Dorsolateral prefrontal cortex (tissue), 120 donors: ENCODE measurements at regions of chr7 and their contacts with region 1.

Region 1: DNA sequence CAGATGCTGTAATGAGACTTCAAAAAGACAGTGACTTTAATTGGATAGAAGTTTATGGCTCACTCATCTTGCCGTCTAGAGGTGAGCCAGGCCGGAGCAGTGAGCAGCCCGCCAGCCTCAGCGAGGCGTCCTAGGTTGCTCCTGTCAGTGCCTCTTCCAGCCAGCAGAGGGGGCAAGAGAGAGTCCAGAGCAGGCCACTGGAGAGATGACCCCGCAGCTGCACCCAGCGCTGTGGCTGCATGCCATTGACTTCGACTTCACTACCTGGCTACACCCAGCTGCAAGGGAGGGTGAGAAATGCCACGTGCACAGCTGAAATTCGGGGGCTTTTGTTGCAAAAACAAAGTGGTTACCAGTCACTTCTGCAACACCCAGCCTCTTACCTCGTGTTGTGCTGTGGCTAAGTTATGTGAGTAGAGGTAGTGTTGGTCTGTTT is 26.5 kb downstream of the NUB1 start:
- DNase-seq: peak; percentile 66 to 79 (median 74)
- H3K4me3 ChIP-seq: peak overlapping the region in 1 of 59 donors; percentile 10
- H3K27ac ChIP-seq: no peak overlapping the region
- H3K27me3 ChIP-seq: no peaks in the 10 kb centered on the region
- CTCF ChIP-seq: peak; percentile 60 to 99 (median 94)

Region 2: DNA sequence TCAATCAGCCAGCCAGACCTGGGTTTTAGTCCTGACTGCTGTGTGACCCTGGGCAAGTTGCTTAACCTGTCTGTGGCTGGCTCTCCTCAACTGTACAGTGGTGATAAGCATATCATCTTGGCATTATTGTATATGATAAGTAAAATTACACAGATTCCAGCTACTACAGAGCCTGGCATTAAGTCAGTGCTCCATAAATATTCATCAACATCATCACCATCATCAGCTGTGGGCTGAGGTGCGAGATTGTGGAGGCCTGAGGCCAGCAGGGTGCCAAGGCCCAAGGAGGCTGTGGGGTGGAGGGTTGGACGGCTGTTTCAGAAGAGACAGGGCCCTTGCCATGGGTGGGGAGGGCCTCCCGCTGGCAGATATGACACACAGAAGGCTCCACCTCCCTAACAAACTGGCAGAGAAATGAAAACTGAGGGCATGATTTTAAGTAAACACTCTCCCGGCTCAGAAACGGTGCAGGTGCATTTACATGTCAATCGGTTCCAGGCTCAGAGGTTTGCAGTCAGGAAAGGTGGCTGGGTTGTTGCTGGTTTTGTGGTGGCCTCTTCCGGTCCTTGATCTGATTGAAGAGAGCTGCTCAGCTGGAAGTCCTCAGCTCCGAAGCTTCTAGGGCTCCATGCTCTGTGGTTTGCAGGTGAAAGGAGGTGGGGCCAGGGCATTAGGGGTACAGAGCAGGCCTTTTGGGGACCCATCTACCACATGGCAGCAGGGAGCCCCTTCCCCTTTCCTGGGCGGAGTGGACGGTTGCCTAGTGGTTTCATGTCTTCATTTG is 61.6 kb after region 1 on chr7:
- intact Hi-C with region 1: loop called in 1 of 2 experiments (anchors 10 kb)
- DNase-seq: no peak
- H3K4me3 ChIP-seq: no peak overlapping the region
- H3K27ac ChIP-seq: peak overlapping the region in 3 of 59 donors; percentile 7 to 84 (median 55)
- H3K27me3 ChIP-seq: peaks cover 0 to 14% (median 0%) of the 10 kb centered on the region in 45 donors
- CTCF ChIP-seq: no peak

Region 3: DNA sequence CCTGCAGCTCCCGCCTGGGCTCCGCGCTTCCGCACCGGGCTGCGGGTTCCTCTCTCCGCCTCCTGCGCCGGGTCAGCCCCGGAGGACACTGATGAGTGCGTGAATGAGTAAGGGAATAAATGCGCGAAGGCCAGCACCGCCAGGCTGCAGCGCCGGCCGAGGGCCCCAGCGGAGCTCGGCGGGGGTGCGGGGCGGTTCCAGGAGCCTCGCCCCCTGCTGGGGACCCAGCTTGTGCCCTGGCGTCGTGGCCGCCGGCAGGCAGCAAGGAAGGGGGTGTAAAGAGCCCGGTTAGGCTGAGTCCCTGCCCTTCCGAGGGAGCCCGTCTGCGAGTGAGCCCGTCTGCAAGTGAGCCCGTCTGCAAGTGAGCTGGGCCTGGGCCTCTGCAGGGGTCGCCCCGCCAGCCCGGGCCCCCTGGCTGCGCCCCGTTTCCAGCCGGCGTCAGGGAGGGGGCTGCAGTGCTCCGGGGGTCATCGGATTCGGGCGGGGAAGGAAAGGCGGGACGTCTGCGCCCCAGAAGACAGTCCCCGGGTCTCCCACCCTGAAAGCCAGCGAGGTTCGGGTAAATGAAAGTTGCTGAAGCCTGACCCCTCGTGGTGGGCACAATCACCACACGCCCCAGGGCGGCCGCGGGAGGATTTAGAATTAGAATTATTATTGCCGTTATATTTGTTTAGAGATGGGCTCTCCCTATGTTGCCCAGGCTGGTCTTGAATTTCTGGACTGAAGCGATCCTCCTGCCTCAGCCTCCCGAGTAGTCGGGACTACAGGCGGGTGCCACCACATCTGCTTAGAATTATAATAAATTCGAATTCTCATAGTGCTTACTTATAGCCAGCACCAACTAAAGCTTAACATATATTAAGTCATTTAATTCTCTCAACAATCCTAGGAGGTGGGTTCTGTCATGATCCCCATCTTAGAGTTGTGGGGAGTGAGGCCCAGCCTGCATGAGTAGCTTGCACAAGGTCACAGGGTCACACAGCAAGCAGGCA is 80.4 kb after region 1 on chr7:
- intact Hi-C with region 1: loop called (anchors 5 to 10 kb)
- DNase-seq: peak in 7 of 10 donors; percentile 38 to 64 (median 49)
- H3K4me3 ChIP-seq: peak overlapping the region; percentile 13 to 75 (median 57)
- H3K27ac ChIP-seq: peak overlapping the region in 14 of 59 donors; percentile 1 to 82 (median 48)
- H3K27me3 ChIP-seq: peaks cover 0 to 5% (median 0%) of the 10 kb centered on the region in 45 donors
- CTCF ChIP-seq: peak; percentile 36 to 86 (median 72)

Region 4: DNA sequence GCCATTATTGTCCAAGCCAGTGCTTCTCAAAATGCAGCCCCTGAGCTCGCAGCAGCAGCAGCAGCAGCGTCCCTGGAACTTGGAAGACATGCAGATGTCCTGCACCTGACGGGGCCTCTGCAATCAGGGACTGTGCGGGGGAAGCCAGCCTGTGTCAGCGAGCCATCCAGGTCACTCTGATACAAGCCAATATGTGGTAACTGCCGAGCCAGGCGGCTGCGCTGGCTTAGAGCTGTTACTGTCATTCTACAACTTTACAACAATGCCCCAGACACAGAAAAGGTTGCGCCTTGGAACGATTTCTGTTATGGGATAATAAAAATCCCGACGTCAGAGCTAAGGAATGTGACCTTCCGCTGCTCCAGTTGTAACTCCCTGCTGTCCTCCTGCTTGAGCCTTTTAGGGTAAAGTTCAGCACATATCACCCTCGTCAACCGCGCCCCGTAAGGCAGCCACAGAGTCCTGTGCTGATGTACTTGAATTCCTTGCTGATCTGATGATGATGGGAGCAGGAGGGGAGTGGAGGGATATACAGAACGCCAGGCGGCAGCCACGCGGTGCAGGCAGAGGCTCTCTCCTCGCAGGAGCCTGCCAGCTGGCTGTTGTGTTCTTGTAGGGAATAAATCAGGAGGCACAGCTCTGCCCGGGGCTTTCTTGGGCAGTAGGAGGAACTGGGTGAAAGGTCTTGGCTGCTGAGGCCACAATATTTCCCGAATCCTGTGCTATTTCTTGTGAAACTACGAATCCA is 91.7 kb after region 1 on chr7:
- intact Hi-C with region 1: no loop called
- DNase-seq: peak; percentile 40 to 85 (median 70)
- H3K4me3 ChIP-seq: peak overlapping the region in 52 of 59 donors; percentile 2 to 60 (median 39)
- H3K27ac ChIP-seq: peak overlapping the region in 53 of 59 donors; percentile 6 to 93 (median 74)
- H3K27me3 ChIP-seq: no peaks in the 10 kb centered on the region
- CTCF ChIP-seq: peak in 44 of 56 donors; percentile 9 to 47 (median 30)

Region 5: GRCh38 chr7:151552352-151553028 is 184.3 kb after region 1 on chr7:
- intact Hi-C with region 1: no loop called
- DNase-seq: no peak
- H3K4me3 ChIP-seq: no peak overlapping the region
- H3K27ac ChIP-seq: peak overlapping the region in 2 of 59 donors; percentile 18 to 36
- H3K27me3 ChIP-seq: no peaks in the 10 kb centered on the region
- CTCF ChIP-seq: no peak

Region 6: DNA sequence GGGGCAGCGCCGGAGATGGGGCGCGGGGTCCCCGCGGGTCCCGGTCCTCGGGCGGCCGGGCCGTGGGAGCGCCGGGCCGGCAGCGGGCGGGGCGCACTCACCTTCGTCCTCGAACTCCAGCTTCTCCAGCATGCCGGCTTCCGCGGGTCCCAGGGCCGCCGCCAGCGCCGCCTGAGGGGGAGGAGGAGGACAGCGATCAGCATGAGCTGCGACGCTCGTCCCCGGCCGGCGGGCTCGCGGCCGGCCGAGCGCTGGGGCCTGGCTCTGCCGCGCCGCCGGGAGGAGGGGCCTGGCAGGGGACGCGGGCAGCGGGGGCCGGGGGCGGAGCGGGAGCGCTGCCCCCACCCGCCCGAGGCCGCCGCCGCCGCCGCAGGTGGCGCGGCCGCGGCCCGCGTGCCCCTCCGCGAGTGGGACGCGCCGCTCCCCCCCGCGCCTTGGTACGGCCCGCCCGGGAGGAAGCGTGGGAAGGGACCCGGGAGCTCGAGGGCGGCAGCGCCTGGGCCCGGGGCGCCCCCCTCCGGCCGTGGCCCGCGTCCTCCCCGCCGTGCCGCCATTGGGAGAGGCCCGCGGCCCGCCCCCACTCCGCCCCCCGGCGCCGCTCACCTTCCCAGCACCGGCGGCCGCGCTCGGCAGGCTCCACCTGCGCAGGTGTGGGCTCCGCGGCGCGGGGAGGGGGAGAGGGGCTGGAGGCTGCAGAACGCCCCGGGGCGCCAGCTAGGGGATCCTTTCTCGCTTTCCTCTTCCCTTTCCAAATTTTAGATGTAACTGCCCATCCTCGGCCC is 264.0 kb after region 1 on chr7:
- intact Hi-C with region 1: loop called in 1 of 2 experiments (anchors 10 kb)
- DNase-seq: peak; percentile 47 to 85 (median 70)
- H3K4me3 ChIP-seq: peak overlapping the region; percentile 49 to 86 (median 74)
- H3K27ac ChIP-seq: peak overlapping the region; percentile 62 to 95 (median 89)
- H3K27me3 ChIP-seq: no peaks in the 10 kb centered on the region
- CTCF ChIP-seq: peak in 34 of 56 donors; percentile 9 to 64 (median 41)

Region 7: GRCh38 chr7:151759591-151760042 is 391.5 kb after region 1 on chr7:
- intact Hi-C with region 1: loop called (anchors 5 to 10 kb)
- DNase-seq: peak in 6 of 10 donors; percentile 44 to 70 (median 52)
- H3K4me3 ChIP-seq: no peak overlapping the region
- H3K27ac ChIP-seq: peak overlapping the region in 8 of 59 donors; percentile 4 to 46 (median 33)
- H3K27me3 ChIP-seq: peaks cover 0 to 12% (median 0%) of the 10 kb centered on the region in 45 donors
- CTCF ChIP-seq: peak; percentile 69 to 94 (median 86)

Region 8: DNA sequence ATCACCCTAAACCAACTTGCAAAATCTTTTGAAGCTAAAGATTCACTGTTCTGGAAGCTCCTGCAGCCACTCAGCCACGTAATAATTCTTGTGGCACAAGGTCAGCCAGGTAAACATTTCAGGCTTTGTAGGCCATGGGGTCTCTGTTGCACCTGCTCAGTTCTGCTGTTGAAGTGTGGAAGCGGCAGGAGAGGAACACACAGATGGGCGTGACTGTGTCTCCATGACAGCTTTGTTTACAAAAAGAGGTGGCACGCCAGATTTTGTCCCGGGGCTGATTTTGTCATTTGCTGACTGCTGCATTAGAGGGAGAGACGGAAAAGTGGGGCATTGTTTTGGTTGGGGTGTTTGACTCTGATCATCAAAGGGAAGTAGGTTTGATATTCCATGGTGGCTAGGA is 405.6 kb after region 1 on chr7:
- intact Hi-C with region 1: no loop called
- DNase-seq: no peak
- H3K4me3 ChIP-seq: no peak overlapping the region
- H3K27ac ChIP-seq: peak overlapping the region in 8 of 59 donors; percentile 1 to 78 (median 40)
- H3K27me3 ChIP-seq: no peaks in the 10 kb centered on the region
- CTCF ChIP-seq: no peak